ENCODE measurements at regions of chr3 and their contacts with region 1.

Region 1: DNA sequence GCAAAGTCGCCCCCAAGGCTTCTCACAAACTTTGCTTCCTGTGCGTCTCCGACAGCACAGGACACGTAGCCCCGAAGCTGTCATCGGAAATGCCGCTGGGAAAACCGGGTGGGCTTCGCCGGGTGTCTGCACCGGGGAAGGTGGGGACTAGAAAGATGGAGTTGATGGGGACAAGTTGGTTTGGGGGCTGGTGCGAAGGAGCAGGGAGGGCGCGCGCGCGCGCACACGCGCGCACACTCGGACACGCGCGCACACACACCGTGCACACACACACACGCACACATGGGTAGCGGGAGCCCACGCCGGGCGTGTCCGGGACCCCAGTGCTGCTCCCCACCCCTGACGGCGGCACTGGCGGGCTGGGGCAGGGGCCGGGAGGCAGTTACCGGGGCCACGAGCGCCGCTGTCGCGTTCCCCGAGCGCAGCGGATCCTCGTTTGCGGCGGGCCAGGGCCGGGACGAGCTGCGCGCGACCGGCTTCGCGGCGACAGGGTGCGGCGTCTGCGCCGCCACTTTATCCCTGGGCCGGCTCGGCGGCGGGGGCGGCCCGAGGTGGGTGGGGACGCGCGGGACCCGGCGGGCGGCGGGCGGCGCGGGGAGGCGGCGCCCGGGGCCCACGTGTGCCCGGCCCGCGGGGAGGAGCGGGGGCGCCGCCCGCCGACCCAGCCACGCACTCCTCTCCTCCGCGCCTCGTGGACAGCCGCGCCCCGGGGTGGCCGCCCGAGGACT is 547 bp upstream of the MGLL start:
- DNase-seq: peak; percentile 15 to 62 (median 40)
- H3K4me3 ChIP-seq: peak overlapping the region; percentile 51 to 81 (median 62)
- H3K4me3 Mint-ChIP-seq: peak overlapping the region; percentile 96 to 99
- H3K27ac ChIP-seq: no peak overlapping the region
- H3K27ac Mint-ChIP-seq: peak overlapping the region; percentile 71 to 85 (median 82)
- H3K4me1 ChIP-seq: peaks cover 34 to 47% of the 10 kb centered on the region in 2 donors
- H3K4me1 Mint-ChIP-seq: peaks cover 38% of the 10 kb centered on the region
- H3K27me3 ChIP-seq: peaks cover 0 to 3% of the 10 kb centered on the region in 2 donors
- H3K27me3 Mint-ChIP-seq: peaks cover 9 to 27% (median 22%) of the 10 kb centered on the region in 3 donors
- CTCF ChIP-seq: no peak

Region 2: DNA sequence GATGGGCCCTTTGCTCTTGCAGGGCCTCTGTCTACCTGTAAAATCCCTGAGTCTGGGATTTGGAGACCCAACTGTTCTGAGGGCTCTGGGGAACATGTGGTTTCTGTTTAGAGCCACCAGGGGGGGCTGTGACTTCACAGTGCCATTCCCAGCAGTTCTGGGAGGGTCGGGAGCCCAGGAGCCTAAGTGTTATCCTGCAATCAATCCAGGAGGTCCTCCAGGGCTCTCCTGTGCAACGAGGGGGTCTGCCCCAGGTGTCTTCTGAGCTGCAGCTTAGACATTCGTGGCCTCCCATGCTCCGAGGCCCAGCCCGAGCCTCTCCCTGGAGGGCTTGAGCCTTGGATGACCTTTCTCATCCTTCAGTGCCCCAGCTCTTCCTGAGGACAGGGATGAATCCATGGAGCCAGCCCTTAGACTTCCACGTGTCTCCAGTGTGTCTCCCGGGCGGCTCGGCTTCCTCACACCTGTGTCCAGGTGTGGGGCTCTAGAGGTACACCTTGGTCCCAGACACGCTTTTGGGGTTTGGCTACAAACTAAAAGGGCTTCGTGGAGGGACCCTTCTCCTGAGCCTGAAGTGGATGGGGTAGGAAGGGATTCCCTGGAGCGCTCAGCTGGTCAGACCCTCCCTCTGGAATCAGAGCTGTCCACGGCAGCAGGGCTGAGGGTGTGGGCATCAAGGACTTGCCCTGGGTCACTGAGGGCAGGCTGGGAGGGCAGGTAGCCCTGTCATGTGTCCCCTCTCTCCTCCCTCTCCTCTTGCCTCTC is 170.4 kb before region 1 on chr3:
- intact Hi-C with region 1: loop called in 1 of 2 experiments (anchors 5 kb)
- DNase-seq: peak; percentile 38 to 67 (median 66)
- H3K4me3 ChIP-seq: no peak overlapping the region
- H3K4me3 Mint-ChIP-seq: no peak overlapping the region
- H3K27ac ChIP-seq: no peak overlapping the region
- H3K27ac Mint-ChIP-seq: peak overlapping the region in 1 of 7 donors; percentile 20
- H3K4me1 ChIP-seq: no peaks in the 10 kb centered on the region
- H3K4me1 Mint-ChIP-seq: peaks cover 4% of the 10 kb centered on the region
- H3K27me3 ChIP-seq: no peaks in the 10 kb centered on the region
- H3K27me3 Mint-ChIP-seq: peaks cover 2 to 7% (median 2%) of the 10 kb centered on the region in 3 donors
- CTCF ChIP-seq: peak; percentile 94

Region 3: GRCh38 chr3:127690823-127691452 is 131.9 kb before region 1 on chr3:
- intact Hi-C with region 1: loop called (anchors 1 to 5 kb)
- DNase-seq: peak; percentile 27 to 53 (median 32)
- H3K4me3 ChIP-seq: no peak overlapping the region
- H3K4me3 Mint-ChIP-seq: no peak overlapping the region
- H3K27ac ChIP-seq: no peak overlapping the region
- H3K27ac Mint-ChIP-seq: peak overlapping the region in 1 of 7 donors; percentile 25
- H3K4me1 ChIP-seq: no peaks in the 10 kb centered on the region
- H3K4me1 Mint-ChIP-seq: peaks cover 2% of the 10 kb centered on the region
- H3K27me3 ChIP-seq: no peaks in the 10 kb centered on the region
- H3K27me3 Mint-ChIP-seq: peaks cover 0 to 1% (median 1%) of the 10 kb centered on the region in 3 donors
- CTCF ChIP-seq: peak; percentile 48

Region 4: DNA sequence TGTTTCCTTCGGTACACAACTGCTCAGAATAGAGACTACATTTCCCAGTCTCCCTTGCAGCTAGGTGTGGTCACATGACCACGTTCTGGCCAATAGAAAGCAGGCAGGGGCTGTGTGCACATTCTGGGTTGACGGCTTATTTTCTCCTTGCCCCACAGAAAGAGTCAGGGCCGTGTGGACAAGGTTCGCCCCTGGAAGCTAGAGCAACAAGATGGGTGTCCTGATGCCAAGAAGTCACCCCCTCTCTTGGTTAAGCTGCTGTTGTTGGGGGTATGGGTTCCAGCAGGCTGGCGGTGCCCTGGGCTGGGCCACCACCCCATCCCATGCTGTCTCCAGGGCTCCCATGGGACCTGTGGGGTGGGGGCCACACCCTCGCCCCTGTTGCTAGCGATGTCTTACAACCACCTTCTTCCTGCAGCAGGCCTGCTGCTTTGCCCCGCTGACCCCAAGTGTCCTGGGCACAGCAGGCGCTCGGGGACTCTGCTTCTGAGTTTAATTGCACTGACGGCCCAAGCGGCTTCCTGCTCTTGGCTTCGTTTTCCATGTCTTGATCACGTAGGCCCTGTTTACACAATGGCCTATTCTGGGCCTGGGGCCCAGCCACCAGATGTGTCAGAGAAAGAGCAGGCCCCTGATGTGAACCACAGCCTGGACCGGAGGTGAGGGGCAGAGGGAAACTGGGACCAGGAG is 125.2 kb before region 1 on chr3:
- intact Hi-C with region 1: loop called (anchors 1 to 5 kb)
- DNase-seq: peak; percentile 41 to 61 (median 51)
- H3K4me3 ChIP-seq: peak overlapping the region in 1 of 3 experiments; percentile 20
- H3K4me3 Mint-ChIP-seq: peak overlapping the region in 1 of 2 donors; percentile 51
- H3K27ac ChIP-seq: peak overlapping the region in 1 of 2 donors; percentile 31
- H3K27ac Mint-ChIP-seq: peak overlapping the region in 6 of 7 donors; percentile 38 to 86 (median 67)
- H3K4me1 ChIP-seq: peaks cover 16 to 18% of the 10 kb centered on the region in 2 donors
- H3K4me1 Mint-ChIP-seq: peaks cover 14% of the 10 kb centered on the region
- H3K27me3 ChIP-seq: no peaks in the 10 kb centered on the region
- H3K27me3 Mint-ChIP-seq: peaks cover 0 to 1% (median 1%) of the 10 kb centered on the region in 3 donors
- CTCF ChIP-seq: no peak

Region 5: GRCh38 chr3:127775398-127776109 is 47.3 kb before region 1 on chr3:
- intact Hi-C with region 1: loop called (anchors 5 to 10 kb)
- DNase-seq: peak in 2 of 3 donors; percentile 38 to 95
- H3K4me3 ChIP-seq: peak overlapping the region in 1 of 3 experiments; percentile 24
- H3K4me3 Mint-ChIP-seq: peak overlapping the region; percentile 59 to 71
- H3K27ac ChIP-seq: peak overlapping the region in 1 of 2 donors; percentile 57
- H3K27ac Mint-ChIP-seq: peak overlapping the region; percentile 13 to 86 (median 69)
- H3K4me1 ChIP-seq: peaks cover 77 to 86% of the 10 kb centered on the region in 2 donors
- H3K4me1 Mint-ChIP-seq: peaks cover 84% of the 10 kb centered on the region
- H3K27me3 ChIP-seq: no peaks in the 10 kb centered on the region
- H3K27me3 Mint-ChIP-seq: peaks cover 0 to 7% (median 0%) of the 10 kb centered on the region in 3 donors
- CTCF ChIP-seq: no peak

Region 6: DNA sequence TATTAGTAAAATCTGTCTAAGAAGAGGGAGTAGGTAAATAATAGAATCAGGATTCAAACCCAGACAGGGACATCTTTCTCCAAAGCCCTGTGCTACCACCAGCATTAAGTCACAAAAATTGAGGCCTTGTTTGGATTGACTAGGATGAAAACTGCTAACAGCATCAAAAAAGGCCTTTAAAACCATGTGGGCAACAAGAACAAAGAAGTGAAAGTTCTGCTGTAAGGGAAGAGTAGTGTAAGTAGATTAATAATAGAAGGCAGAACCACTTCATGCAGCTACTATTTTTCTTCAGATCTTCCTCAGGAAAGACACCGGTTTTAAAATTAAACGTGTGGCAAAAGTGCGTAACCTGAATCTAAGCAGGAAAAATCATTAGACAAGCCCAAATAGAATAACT is 76.9 kb after region 1 on chr3:
- intact Hi-C with region 1: no loop called
- DNase-seq: no peak
- H3K4me3 ChIP-seq: no peak overlapping the region
- H3K4me3 Mint-ChIP-seq: no peak overlapping the region
- H3K27ac ChIP-seq: no peak overlapping the region
- H3K27ac Mint-ChIP-seq: no peak overlapping the region
- H3K4me1 ChIP-seq: peaks cover 0 to 14% of the 10 kb centered on the region in 2 donors
- H3K4me1 Mint-ChIP-seq: peaks cover 15% of the 10 kb centered on the region
- H3K27me3 ChIP-seq: no peaks in the 10 kb centered on the region
- H3K27me3 Mint-ChIP-seq: peaks cover 4 to 5% (median 4%) of the 10 kb centered on the region in 3 donors
- CTCF ChIP-seq: no peak